GM12878 (cell line): ENCODE measurements at regions of chr3 and their contacts with region 1.

Region 1: GRCh38 chr3:168165390-168166269 is 69.9 kb upstream of the GOLIM4 start:
- DNase-seq: peak; percentile 47
- ATAC-seq: peak; percentile 87
- H3K4me3 ChIP-seq: no peak overlapping the region
- H3K27ac ChIP-seq: peak overlapping the region; percentile 20; the same call in 1 of the 2 replicates
- H3K4me1 ChIP-seq: no peaks in the 10 kb centered on the region
- H3K27me3 ChIP-seq: no peaks in the 10 kb centered on the region
- CTCF ChIP-seq: peak; percentile 64 to 85 (median 71)
- EP300 ChIP-seq: no peak
- POLR2A ChIP-seq: no peak
- RAD21 ChIP-seq: peak; percentile 96

Region 2: GRCh38 chr3:167929968-167930367 is 235.7 kb before region 1 on chr3:
- CTCF ChIA-PET with region 1: interaction called, 7 read pairs
- POLR2A ChIA-PET with region 1: no interaction called
- RAD21 ChIA-PET with region 1: no interaction called
- SMC1A ChIA-PET with region 1: interaction called, 3 read pairs
- in situ Hi-C with region 1: no loop called
- intact Hi-C with region 1: loop called (anchors 10 kb)
- DNase-seq: no peak
- ATAC-seq: 0 out of 3 replicates have a peak, but pooled peaks have one; percentile 29
- H3K4me3 ChIP-seq: no peak overlapping the region
- H3K27ac ChIP-seq: no peak overlapping the region
- H3K4me1 ChIP-seq: no peaks in the 10 kb centered on the region
- H3K27me3 ChIP-seq: no peaks in the 10 kb centered on the region; a peak in 1 of 4 replicates
- CTCF ChIP-seq: no peak
- EP300 ChIP-seq: no peak
- POLR2A ChIP-seq: no peak
- RAD21 ChIP-seq: no peak

Region 3: DNA sequence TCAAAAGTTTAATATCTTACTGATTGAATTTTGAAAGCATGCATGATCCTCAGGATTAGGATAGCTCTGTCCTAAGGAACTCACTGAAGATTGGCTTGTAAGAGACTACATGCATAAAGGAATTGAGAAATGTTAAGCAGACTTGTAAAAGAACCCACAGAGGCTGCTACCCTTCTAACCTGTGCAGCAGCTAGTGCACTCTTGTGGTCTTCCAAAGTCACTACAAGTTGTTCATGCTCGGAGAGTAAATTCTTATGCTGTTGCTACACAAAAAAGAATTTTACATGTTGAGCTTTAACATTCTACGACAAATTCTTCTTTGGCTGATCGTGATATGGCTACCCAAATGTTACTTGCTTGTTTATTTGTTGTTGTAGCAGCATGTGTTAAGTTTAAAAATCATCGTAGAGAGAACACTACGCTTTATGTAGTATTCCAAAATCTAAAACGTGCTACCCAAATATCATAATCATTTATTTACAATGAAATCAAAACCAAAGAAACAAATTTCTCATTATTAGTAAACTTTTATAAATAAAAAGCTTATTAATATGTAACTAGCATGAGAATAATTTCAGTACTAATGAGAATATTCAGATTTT is 124.9 kb before region 1 on chr3:
- CTCF ChIA-PET with region 1: interaction called, 318 read pairs
- POLR2A ChIA-PET with region 1: no interaction called
- RAD21 ChIA-PET with region 1: interaction called, 76 read pairs
- SMC1A ChIA-PET with region 1: interaction called, 186 read pairs
- in situ Hi-C with region 1: loop called (anchors 5 kb)
- intact Hi-C with region 1: no loop called
- DNase-seq: no peak
- ATAC-seq: peak; percentile 68
- H3K4me3 ChIP-seq: no peak overlapping the region
- H3K27ac ChIP-seq: no peak overlapping the region
- H3K4me1 ChIP-seq: no peaks in the 10 kb centered on the region
- H3K27me3 ChIP-seq: no peaks in the 10 kb centered on the region
- CTCF ChIP-seq: peak; percentile 31 to 58 (median 51); a peak in 4 of 6 replicates
- EP300 ChIP-seq: no peak
- POLR2A ChIP-seq: no peak
- RAD21 ChIP-seq: peak; percentile 58

Region 4: GRCh38 chr3:168061332-168061996 is 104.2 kb before region 1 on chr3:
- CTCF ChIA-PET with region 1: interaction called, 318 read pairs
- POLR2A ChIA-PET with region 1: no interaction called
- RAD21 ChIA-PET with region 1: interaction called, 16 read pairs
- SMC1A ChIA-PET with region 1: interaction called, 25 read pairs
- in situ Hi-C with region 1: no loop called
- intact Hi-C with region 1: no loop called
- DNase-seq: no peak
- ATAC-seq: peak; percentile 96
- H3K4me3 ChIP-seq: peak overlapping the region; percentile 42; the same call in 1 of the 2 replicates
- H3K27ac ChIP-seq: no peak overlapping the region
- H3K4me1 ChIP-seq: peaks cover 10% of the 10 kb centered on the region
- H3K27me3 ChIP-seq: no peaks in the 10 kb centered on the region
- CTCF ChIP-seq: no peak
- EP300 ChIP-seq: peak in 1 of 2 experiments; percentile 48; a peak in 1 of 4 replicates
- POLR2A ChIP-seq: no peak
- RAD21 ChIP-seq: 0 out of 2 replicates have a peak, but pooled peaks have one; percentile 2

Region 5: DNA sequence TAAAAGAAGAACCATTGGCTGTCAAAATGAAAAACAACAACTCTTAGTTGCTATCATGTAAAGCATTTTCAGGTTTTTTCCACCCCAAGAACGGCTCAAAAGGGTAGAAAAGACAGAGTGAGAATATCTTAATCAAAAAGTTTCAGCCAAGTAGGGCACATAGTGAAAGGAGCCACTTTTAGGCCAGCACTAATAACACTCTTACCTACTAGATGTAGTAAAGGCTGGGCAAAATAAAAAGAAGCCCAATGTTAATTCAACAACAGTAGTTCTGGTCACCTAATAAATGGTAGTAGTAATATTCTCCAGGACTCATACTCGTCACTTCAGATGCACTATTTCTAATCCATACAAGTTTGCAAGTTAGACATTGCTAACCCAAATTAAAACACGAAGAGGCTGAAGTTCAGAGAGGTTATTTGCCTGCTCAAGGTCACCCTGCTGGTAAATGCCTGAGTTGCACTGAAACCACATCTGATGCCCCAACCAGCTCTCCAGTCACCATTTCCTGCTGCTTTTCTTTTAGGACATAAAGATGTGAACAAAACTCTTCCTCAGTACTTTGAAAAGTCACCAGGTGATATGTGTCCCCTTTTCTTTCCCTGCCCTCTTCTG is 77.4 kb before region 1 on chr3:
- CTCF ChIA-PET with region 1: interaction called, 21 read pairs
- POLR2A ChIA-PET with region 1: no interaction called
- RAD21 ChIA-PET with region 1: interaction called, 12 read pairs
- SMC1A ChIA-PET with region 1: interaction called, 16 read pairs
- in situ Hi-C with region 1: no loop called
- intact Hi-C with region 1: no loop called
- DNase-seq: peak; percentile 35
- ATAC-seq: peak; percentile 75
- H3K4me3 ChIP-seq: peak overlapping the region; percentile 41; the same call in 1 of the 2 replicates
- H3K27ac ChIP-seq: peak overlapping the region; percentile 5
- H3K4me1 ChIP-seq: peaks cover 21% of the 10 kb centered on the region
- H3K27me3 ChIP-seq: no peaks in the 10 kb centered on the region
- CTCF ChIP-seq: peak; percentile 23 to 59 (median 59); a peak in 5 of 6 replicates
- EP300 ChIP-seq: no peak
- POLR2A ChIP-seq: no peak
- RAD21 ChIP-seq: peak; percentile 26; the same call in 1 of the 2 replicates

Region 6: GRCh38 chr3:168095611-168096209 is 69.9 kb before region 1 on chr3 and contains the start of gene GOLIM4:
- CTCF ChIA-PET with region 1: interaction called, 21 read pairs
- POLR2A ChIA-PET with region 1: no interaction called
- RAD21 ChIA-PET with region 1: interaction called, 9 read pairs
- SMC1A ChIA-PET with region 1: interaction called, 16 read pairs
- in situ Hi-C with region 1: no loop called
- intact Hi-C with region 1: loop called (anchors 1 kb)
- DNase-seq: peak; percentile 90
- ATAC-seq: peak; percentile 90
- H3K4me3 ChIP-seq: peak within 1 kb of the TSS; percentile 76
- H3K27ac ChIP-seq: peak within 1 kb of the TSS; percentile 81
- H3K4me1 ChIP-seq: no peaks in the 10 kb centered on the region
- H3K27me3 ChIP-seq: no peaks in the 10 kb centered on the region
- CTCF ChIP-seq: 0 out of 6 replicates have a peak, but pooled peaks of 2 of the 3 experiments have one; percentile 1 to 7
- EP300 ChIP-seq: no peak
- POLR2A ChIP-seq: peak; percentile 78
- RAD21 ChIP-seq: no peak
- polyA plus RNA-seq, gene GOLIM4: 11.1 to 14.6 TPM

Region 7: DNA sequence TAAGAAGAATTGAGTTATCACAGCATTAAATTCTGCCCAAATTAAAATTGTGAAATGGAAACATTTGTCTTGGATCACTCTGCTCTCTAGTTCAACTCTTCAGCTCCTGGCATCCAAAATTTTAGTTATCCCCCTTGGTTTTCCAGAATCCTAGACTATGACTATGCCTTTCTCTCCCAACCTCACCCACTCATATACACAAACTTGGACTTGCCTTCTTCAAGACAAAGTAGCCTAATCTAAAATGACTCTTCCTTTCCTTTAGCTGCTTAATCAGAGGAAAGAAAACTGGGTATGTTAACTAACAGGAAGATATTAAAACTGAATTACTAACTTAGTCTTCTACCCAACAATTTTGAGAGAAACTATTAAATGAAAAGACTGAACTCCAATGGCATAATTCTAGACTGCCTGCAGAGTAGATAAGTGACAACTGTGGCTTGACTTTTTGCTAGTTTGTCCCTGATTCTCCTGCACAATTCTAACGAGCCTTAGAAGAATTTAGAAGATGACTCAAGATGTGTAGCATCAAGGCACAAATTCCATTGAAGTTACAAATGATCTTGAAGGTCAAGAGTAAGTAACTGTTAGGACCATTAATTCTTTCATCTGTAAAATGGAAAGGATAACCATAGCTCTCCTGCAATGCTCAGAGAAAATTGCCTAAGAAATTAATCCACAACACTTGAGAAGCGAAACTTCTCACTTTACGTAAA is 64.7 kb before region 1 on chr3:
- CTCF ChIA-PET with region 1: interaction called, 6 read pairs
- POLR2A ChIA-PET with region 1: no interaction called
- RAD21 ChIA-PET with region 1: interaction called, 9 read pairs
- SMC1A ChIA-PET with region 1: interaction called, 11 read pairs
- in situ Hi-C with region 1: no loop called
- intact Hi-C with region 1: no loop called
- DNase-seq: no peak
- ATAC-seq: no peak
- H3K4me3 ChIP-seq: no peak overlapping the region
- H3K27ac ChIP-seq: no peak overlapping the region
- H3K4me1 ChIP-seq: no peaks in the 10 kb centered on the region
- H3K27me3 ChIP-seq: no peaks in the 10 kb centered on the region
- CTCF ChIP-seq: no peak
- EP300 ChIP-seq: no peak
- POLR2A ChIP-seq: no peak
- RAD21 ChIP-seq: no peak

Region 8: GRCh38 chr3:168285506-168285905 is 119.9 kb after region 1 on chr3:
- CTCF ChIA-PET with region 1: no interaction called
- POLR2A ChIA-PET with region 1: no interaction called
- RAD21 ChIA-PET with region 1: no interaction called
- SMC1A ChIA-PET with region 1: no interaction called
- in situ Hi-C with region 1: no loop called
- intact Hi-C with region 1: no loop called
- DNase-seq: no peak
- ATAC-seq: peak; percentile 77
- H3K4me3 ChIP-seq: no peak overlapping the region
- H3K27ac ChIP-seq: no peak overlapping the region
- H3K4me1 ChIP-seq: no peaks in the 10 kb centered on the region; the same call in 1 of the 2 replicates
- H3K27me3 ChIP-seq: no peaks in the 10 kb centered on the region
- CTCF ChIP-seq: no peak
- EP300 ChIP-seq: no peak
- POLR2A ChIP-seq: no peak
- RAD21 ChIP-seq: no peak

Region 9: DNA sequence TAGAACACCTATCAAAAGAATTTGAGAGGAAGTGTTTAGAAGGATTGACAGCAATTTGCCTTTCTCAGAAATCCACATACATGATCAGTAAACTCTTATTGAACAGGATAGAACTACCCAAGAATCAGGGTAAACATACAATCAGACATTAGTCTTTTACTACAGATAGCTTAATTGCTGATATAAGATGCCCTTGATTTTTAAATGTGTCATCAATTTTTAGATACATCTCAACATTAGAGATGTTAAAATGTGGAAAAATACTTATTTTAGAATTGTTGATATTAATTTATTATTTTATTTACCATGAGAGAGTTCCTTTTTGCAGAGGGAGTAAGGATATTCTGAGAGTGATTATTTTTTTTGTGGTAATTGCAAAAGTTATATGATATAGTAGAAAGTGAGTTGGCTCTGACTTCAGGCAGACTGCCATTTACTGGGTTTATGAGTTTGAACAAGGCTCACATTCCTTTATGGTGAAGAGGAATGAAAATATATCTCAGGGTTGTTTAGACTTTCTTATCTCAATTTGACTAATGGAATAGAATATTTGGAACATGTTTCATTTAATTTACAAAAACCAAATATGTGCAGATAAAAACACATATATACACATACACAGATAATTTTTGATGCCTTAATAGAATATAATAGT is 232.9 kb after region 1 on chr3:
- CTCF ChIA-PET with region 1: no interaction called
- POLR2A ChIA-PET with region 1: no interaction called
- RAD21 ChIA-PET with region 1: no interaction called
- SMC1A ChIA-PET with region 1: no interaction called
- in situ Hi-C with region 1: no loop called
- intact Hi-C with region 1: no loop called
- DNase-seq: no peak
- ATAC-seq: no peak
- H3K4me3 ChIP-seq: no peak overlapping the region
- H3K27ac ChIP-seq: no peak overlapping the region
- H3K4me1 ChIP-seq: no peaks in the 10 kb centered on the region
- H3K27me3 ChIP-seq: no peaks in the 10 kb centered on the region
- CTCF ChIP-seq: no peak
- EP300 ChIP-seq: no peak
- POLR2A ChIP-seq: no peak
- RAD21 ChIP-seq: no peak